ENCODE measurements at regions of chr6 and their contacts with region 1.

Region 1: DNA sequence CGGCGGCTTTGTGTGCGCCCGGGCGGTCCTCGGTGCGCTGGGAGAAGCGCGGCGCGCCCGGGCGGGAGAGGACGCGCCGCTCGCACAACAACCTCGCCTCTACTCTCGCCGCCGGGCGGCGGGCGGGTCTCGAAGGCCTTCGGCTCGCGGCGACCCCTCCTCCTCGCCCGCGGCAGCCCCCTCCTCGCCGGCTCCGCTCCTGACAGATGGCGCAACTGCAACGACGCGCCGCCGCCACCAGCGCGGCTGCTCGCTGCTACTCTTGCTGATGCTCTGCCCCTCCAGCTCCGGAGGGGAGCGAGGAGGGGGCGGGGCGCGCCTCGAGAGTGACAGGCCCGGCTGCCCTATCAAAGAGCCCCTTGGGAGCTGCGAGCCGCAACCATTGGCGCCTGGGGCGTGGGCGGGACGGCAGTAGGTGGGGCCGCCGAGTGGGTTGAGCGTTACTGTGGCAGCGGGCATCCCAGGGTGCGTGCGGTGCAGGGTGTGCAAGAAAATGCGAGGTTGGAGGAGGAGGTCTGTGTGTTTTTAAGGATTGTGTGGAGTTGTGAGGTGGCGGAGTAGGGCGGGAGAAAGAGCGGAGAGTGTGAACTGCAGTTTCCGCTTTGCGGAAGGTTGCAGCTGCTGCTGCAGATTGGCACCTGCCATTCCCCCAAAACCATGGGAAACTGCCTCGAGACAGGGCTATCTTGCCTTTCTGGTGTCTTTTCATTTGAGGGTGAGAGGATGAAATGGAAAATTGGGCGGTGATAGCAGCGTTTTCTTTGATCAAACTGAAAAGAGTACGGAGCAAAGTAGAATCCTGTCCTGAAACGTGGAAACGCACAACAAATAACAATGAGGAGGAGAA is at the start of gene FYN:
- DNase-seq: peak; percentile 97 to 100 (median 99)

Region 2: DNA sequence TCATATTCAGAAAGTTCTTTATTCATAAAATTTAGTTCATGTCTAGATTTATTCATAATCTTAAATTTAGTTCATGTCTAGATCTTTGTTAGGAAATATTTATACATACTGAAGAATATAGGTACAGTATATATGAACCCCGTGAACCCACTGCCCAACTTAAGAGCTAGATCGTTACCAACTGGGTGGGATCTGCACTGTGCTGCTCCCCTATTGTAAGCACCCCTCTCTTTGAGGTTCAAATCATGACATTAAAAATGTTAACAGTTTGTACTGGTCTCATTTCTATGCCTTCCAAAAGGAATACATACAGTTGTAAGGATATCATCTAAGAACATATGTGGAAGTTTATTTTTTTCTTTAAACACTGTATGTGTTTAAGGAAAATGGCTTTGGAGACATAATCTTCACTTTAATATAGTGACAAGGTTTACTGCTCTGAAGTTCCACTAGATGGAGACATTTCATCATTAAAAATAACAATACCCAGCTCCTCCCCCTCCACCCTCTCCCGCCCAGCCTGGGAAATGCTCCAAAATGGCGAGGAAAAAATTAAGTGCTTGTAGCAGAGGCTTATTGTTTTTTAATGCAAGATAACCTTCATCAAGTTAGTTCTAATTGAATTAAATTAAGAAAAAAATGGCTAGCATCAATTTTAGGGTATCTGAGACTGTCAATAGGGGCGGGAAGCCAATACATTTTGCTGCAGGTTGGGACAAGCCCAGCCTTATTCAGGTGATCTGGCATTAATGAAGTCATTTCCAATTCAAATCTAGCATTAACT is 163.6 kb before region 1 on chr6:
- intact Hi-C with region 1: loop called (anchors 2 kb)
- DNase-seq: peak in 9 of 10 donors; percentile 28 to 89 (median 62)

Region 3: GRCh38 chr6:111812060-111813038 is 61.1 kb before region 1 on chr6:
- intact Hi-C with region 1: loop called (anchors 10 kb)
- DNase-seq: peak in 1 of 10 donors; percentile 48

Region 4: GRCh38 chr6:111997078-111997852 is 123.9 kb after region 1 on chr6:
- intact Hi-C with region 1: loop called (anchors 5 kb)
- DNase-seq: peak; percentile 71 to 98 (median 80)